GM12878 (cell line): ENCODE measurements at regions of chr2 and their contacts with region 1.

Region 1: GRCh38 chr2:138787053-138787666 is 7.0 kb upstream of the NXPH2 start:
- DNase-seq: no peak
- ATAC-seq: peak; percentile 54
- H3K4me3 ChIP-seq: no peak overlapping the region
- H3K27ac ChIP-seq: no peak overlapping the region
- H3K4me1 ChIP-seq: no peaks in the 10 kb centered on the region
- H3K27me3 ChIP-seq: no peaks in the 10 kb centered on the region
- CTCF ChIP-seq: peak; percentile 51 to 62 (median 56); a peak in 5 of 6 replicates
- EP300 ChIP-seq: no peak
- POLR2A ChIP-seq: no peak
- RAD21 ChIP-seq: peak; percentile 78

Region 2: DNA sequence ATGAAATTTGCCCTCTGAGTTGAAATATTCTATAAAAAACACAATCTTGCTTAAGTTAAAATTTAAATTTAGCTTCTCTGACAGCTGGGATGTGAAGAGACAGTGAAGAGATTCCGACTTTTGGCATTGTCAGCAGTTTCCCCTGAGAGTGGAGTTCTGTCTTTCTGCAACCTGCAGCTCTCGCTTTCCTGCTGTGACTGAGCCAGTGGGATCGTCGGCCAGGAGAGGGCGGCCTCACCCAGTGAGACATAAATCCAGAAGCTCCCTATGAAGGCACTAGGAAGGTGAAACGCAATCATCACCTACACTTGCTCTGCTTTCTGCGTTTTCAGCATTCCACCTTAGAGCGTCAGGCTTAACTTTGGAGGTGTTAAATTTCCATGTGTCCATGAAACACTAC is 898.3 kb before region 1 on chr2:
- CTCF ChIA-PET with region 1: interaction called, 12 read pairs
- POLR2A ChIA-PET with region 1: no interaction called
- RAD21 ChIA-PET with region 1: no interaction called
- SMC1A ChIA-PET with region 1: no interaction called
- in situ Hi-C with region 1: loop called (anchors 25 kb)
- intact Hi-C with region 1: no loop called
- DNase-seq: no peak
- ATAC-seq: no peak
- H3K4me3 ChIP-seq: no peak overlapping the region
- H3K27ac ChIP-seq: no peak overlapping the region
- H3K4me1 ChIP-seq: no peaks in the 10 kb centered on the region
- H3K27me3 ChIP-seq: no peaks in the 10 kb centered on the region; a peak in 2 of 4 replicates
- CTCF ChIP-seq: peak; percentile 10 to 28 (median 22); a peak in 3 of 6 replicates
- EP300 ChIP-seq: no peak
- POLR2A ChIP-seq: no peak
- RAD21 ChIP-seq: 0 out of 2 replicates have a peak, but pooled peaks have one; percentile 8

Region 3: DNA sequence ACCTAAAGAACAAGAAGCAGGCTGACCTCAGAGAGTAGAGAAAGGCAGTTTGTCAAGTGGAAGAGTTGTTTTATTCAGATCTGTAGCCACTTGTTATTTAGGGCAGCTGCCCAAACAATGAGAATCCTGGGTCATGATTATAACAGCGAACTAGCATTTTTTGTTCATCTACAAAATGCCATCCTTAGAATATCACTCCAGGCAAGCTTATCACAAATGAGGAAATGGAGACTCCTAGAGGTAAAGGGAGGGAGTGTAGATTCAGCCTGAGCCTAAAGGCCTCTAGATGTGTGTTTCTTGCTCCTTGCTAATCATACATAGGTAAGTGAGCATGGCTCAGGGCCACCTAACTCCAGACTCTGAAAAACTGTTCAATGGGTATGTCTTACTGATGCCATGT is 696.8 kb before region 1 on chr2:
- CTCF ChIA-PET with region 1: interaction called, 6 read pairs
- POLR2A ChIA-PET with region 1: no interaction called
- RAD21 ChIA-PET with region 1: interaction called, 3 read pairs
- SMC1A ChIA-PET with region 1: interaction called, 5 read pairs
- in situ Hi-C with region 1: no loop called
- intact Hi-C with region 1: loop called (anchors 10 kb)
- DNase-seq: no peak
- ATAC-seq: peak; percentile 98
- H3K4me3 ChIP-seq: no peak overlapping the region
- H3K27ac ChIP-seq: no peak overlapping the region
- H3K4me1 ChIP-seq: no peaks in the 10 kb centered on the region
- H3K27me3 ChIP-seq: no peaks in the 10 kb centered on the region
- CTCF ChIP-seq: peak; percentile 56 to 73 (median 58); a peak in 5 of 6 replicates
- EP300 ChIP-seq: no peak
- POLR2A ChIP-seq: no peak
- RAD21 ChIP-seq: peak; percentile 75

Region 4: DNA sequence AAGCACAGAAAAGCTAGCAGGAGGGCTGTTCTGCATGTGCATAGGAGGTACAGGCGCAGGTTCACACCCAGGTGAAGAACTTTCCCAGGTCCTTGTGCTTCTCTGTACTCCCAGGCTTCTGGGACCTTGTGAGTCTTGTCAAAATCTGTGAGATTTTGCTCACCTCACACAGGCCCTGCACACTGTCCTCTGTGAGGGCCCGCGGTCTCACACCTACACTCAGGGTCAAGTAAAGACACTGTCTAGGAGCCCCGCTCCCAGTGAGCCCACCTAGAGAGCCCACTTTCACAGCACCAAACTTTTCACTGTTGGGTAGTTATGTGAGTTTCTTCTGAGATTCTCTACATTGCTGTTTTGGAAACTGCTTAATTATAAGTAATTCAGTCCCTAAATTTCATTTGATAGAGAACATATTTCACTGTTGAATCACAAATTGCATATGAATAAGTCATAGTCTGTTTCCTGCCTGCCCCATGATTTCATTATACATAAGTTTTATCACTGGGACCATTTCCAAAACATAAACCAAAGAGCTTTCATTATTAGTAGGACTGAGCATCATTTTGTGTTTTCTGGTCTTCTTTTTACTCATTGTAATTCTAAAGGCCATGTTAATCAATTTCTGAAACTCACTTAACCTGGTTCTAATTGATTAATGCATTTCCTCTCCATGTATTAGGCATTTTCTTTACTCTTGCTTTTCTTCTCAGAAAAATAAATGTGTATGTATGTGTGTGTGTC is 519.8 kb before region 1 on chr2:
- CTCF ChIA-PET with region 1: no interaction called
- POLR2A ChIA-PET with region 1: no interaction called
- RAD21 ChIA-PET with region 1: no interaction called
- SMC1A ChIA-PET with region 1: no interaction called
- in situ Hi-C with region 1: no loop called
- intact Hi-C with region 1: loop called (anchors 10 kb)
- DNase-seq: peak; percentile 47
- ATAC-seq: peak; percentile 88
- H3K4me3 ChIP-seq: no peak overlapping the region
- H3K27ac ChIP-seq: no peak overlapping the region
- H3K4me1 ChIP-seq: peaks cover 9% of the 10 kb centered on the region; the same call in 1 of the 2 replicates
- H3K27me3 ChIP-seq: no peaks in the 10 kb centered on the region
- CTCF ChIP-seq: no peak
- EP300 ChIP-seq: peak; percentile 29 to 77; a peak in 3 of 4 replicates
- POLR2A ChIP-seq: no peak
- RAD21 ChIP-seq: no peak

Region 5: DNA sequence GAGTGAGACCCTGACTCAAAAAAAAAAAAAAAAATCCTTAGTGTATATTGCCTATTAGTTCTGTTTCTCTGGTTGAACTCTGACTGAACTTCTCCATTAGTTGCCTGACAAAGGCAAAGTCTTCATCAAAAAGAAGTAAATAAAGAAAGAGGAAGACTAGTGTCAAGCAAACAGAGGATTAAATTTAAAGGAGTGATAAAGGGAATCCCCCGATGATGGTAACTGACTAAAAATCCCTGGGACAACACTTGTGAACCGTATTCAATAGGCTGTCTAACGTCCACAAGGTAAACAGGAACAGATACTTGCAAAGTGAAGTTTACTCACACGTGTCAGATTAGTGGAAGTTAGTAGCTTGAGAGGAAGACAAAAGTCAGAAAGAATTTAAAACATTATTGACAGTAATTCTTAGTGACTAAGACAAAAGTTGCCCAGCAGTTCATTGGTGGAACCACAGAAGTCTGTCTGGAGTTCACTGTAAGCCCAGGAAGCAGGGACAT is 311.8 kb before region 1 on chr2:
- CTCF ChIA-PET with region 1: interaction called, 9 read pairs
- POLR2A ChIA-PET with region 1: no interaction called
- RAD21 ChIA-PET with region 1: interaction called, 13 read pairs
- SMC1A ChIA-PET with region 1: interaction called, 8 read pairs
- in situ Hi-C with region 1: no loop called
- intact Hi-C with region 1: no loop called
- DNase-seq: peak; percentile 53
- ATAC-seq: peak; percentile 92
- H3K4me3 ChIP-seq: no peak overlapping the region
- H3K27ac ChIP-seq: peak overlapping the region; percentile 61
- H3K4me1 ChIP-seq: peaks cover 21% of the 10 kb centered on the region
- H3K27me3 ChIP-seq: no peaks in the 10 kb centered on the region
- CTCF ChIP-seq: no peak
- EP300 ChIP-seq: no peak
- POLR2A ChIP-seq: no peak
- RAD21 ChIP-seq: no peak

Region 6: GRCh38 chr2:138838851-138839620 is 51.9 kb after region 1 on chr2:
- CTCF ChIA-PET with region 1: no interaction called
- POLR2A ChIA-PET with region 1: no interaction called
- RAD21 ChIA-PET with region 1: no interaction called
- SMC1A ChIA-PET with region 1: no interaction called
- in situ Hi-C with region 1: no loop called
- intact Hi-C with region 1: no loop called
- DNase-seq: no peak
- ATAC-seq: no peak
- H3K4me3 ChIP-seq: no peak overlapping the region
- H3K27ac ChIP-seq: no peak overlapping the region
- H3K4me1 ChIP-seq: no peaks in the 10 kb centered on the region
- H3K27me3 ChIP-seq: no peaks in the 10 kb centered on the region
- CTCF ChIP-seq: no peak
- EP300 ChIP-seq: no peak
- POLR2A ChIP-seq: no peak
- RAD21 ChIP-seq: no peak

Region 7: GRCh38 chr2:138853296-138853695 is 66.1 kb after region 1 on chr2:
- CTCF ChIA-PET with region 1: no interaction called
- POLR2A ChIA-PET with region 1: no interaction called
- RAD21 ChIA-PET with region 1: no interaction called
- SMC1A ChIA-PET with region 1: no interaction called
- in situ Hi-C with region 1: no loop called
- intact Hi-C with region 1: no loop called
- DNase-seq: no peak
- ATAC-seq: no peak
- H3K4me3 ChIP-seq: no peak overlapping the region
- H3K27ac ChIP-seq: no peak overlapping the region
- H3K4me1 ChIP-seq: no peaks in the 10 kb centered on the region
- H3K27me3 ChIP-seq: no peaks in the 10 kb centered on the region
- CTCF ChIP-seq: no peak
- EP300 ChIP-seq: no peak
- POLR2A ChIP-seq: no peak
- RAD21 ChIP-seq: no peak